ENCODE measurements at regions of chr6 and their contacts with region 1.

Region 1: GRCh38 chr6:2900821-2901644 is 2.1 kb downstream of the SERPINB9 start:
- DNase-seq: no peak
- H3K4me3 Mint-ChIP-seq: peak overlapping the region; percentile 99
- H3K27ac Mint-ChIP-seq: peak overlapping the region; percentile 92
- H3K4me1 Mint-ChIP-seq: peaks cover 50% of the 10 kb centered on the region
- H3K27me3 Mint-ChIP-seq: no peaks in the 10 kb centered on the region

Region 2: GRCh38 chr6:2791124-2791974 is 109.7 kb before region 1 on chr6:
- intact Hi-C with region 1: loop called (anchors 2 kb)
- DNase-seq: peak; percentile 55
- H3K4me3 Mint-ChIP-seq: peak overlapping the region; percentile 41
- H3K27ac Mint-ChIP-seq: peak overlapping the region; percentile 87
- H3K4me1 Mint-ChIP-seq: peaks cover 44% of the 10 kb centered on the region
- H3K27me3 Mint-ChIP-seq: no peaks in the 10 kb centered on the region

Region 3: GRCh38 chr6:2853761-2854395 is 47.2 kb before region 1 on chr6:
- intact Hi-C with region 1: loop called (anchors 2 kb)
- DNase-seq: no peak
- H3K4me3 Mint-ChIP-seq: peak overlapping the region; percentile 43
- H3K27ac Mint-ChIP-seq: peak overlapping the region; percentile 99
- H3K4me1 Mint-ChIP-seq: peaks cover 68% of the 10 kb centered on the region
- H3K27me3 Mint-ChIP-seq: no peaks in the 10 kb centered on the region

Region 4: DNA sequence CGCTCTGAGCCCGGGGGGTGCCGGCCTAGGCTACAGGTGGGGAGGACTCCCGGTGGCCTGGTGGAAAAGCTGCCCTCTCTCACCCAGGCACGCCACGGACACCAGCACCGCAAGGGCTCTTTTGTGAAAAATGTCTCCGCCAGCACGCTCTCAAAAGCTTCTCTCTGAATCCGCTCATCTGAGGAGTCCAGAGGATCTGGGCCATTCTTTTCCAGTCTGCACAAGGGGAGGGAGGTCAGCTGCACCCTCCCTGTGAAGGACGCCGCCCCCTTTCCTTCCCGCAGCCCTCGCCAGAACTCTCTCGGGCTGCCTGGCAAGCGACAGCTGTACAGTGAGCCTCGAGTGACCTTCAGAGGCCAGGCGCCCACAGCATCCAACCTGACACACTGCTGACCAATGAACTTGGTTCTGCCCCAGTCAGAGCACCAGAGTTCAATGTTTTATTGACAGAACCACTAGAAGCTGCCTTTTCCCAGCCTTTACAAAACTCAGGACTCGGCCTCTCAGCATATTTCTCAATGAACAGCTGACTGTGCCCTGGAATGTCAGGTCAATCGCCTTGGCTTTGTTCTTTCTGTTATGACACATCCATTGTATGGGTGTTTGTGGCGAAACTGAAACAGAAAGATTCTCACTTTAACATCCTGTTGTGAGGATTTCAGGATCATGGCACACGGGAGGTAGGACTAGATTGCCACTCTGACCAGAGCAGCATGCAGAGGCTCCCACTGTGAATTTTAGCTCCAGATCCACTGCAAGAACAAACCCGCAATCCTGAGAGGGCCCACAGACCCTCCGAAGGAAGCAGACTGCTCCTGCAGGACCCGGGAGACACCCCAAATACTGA is 24.6 kb before region 1 on chr6:
- intact Hi-C with region 1: loop called (anchors 2 kb)
- DNase-seq: no peak
- H3K4me3 Mint-ChIP-seq: peak overlapping the region; percentile 86
- H3K27ac Mint-ChIP-seq: peak overlapping the region; percentile 99
- H3K4me1 Mint-ChIP-seq: peaks cover 65% of the 10 kb centered on the region
- H3K27me3 Mint-ChIP-seq: no peaks in the 10 kb centered on the region